K562 (cell line): ENCODE measurements at regions of chr2 and their contacts with region 1.

Region 1: GRCh38 chr2:177692828-177693269 is 300.3 kb downstream of the AGPS start:
- DNase-seq: peak in 1 of 4 experiments; percentile 46
- ATAC-seq: peak; percentile 75
- H3K4me3 ChIP-seq: no peak overlapping the region
- H3K27ac ChIP-seq: no peak overlapping the region
- H3K4me1 ChIP-seq: peaks cover 7 to 27% of the 10 kb centered on the region in 2 experiments; a peak in 4 of 5 replicates
- H3K27me3 ChIP-seq: no peaks in the 10 kb centered on the region
- CTCF ChIP-seq: peak; percentile 17 to 53 (median 26); a peak in 3 of 6 replicates
- EP300 ChIP-seq: no peak
- POLR2A ChIP-seq: no peak
- RAD21 ChIP-seq: peak in 1 of 2 experiments; percentile 53; a peak in 2 of 4 replicates

Region 2: GRCh38 chr2:177636672-177637071 is 56.2 kb before region 1 on chr2:
- CTCF ChIA-PET with region 1: no interaction called
- POLR2A ChIA-PET with region 1: no interaction called
- in situ Hi-C with region 1: no loop called
- intact Hi-C with region 1: loop called (anchors 5 kb)
- DNase-seq: peak in 1 of 4 experiments; percentile 52
- ATAC-seq: peak; percentile 41
- H3K4me3 ChIP-seq: no peak overlapping the region
- H3K27ac ChIP-seq: no peak overlapping the region
- H3K4me1 ChIP-seq: peaks cover 0 to 22% of the 10 kb centered on the region in 2 experiments; a peak in 3 of 5 replicates
- H3K27me3 ChIP-seq: no peaks in the 10 kb centered on the region; a peak in 1 of 5 replicates
- CTCF ChIP-seq: peak; percentile 43 to 69 (median 46); a peak in 5 of 6 replicates
- EP300 ChIP-seq: no peak
- POLR2A ChIP-seq: no peak
- RAD21 ChIP-seq: peak; percentile 80 to 85